Heart left ventricle (tissue), 16 donors: ENCODE measurements at regions of chr1 and their contacts with region 1.

Region 1: GRCh38 chr1:9867408-9868243 is 42.4 kb downstream of the CTNNBIP1 start:
- DNase-seq: peak; percentile 72 to 89 (median 80)
- ATAC-seq: peak; percentile 68 to 88 (median 80)
- H3K4me3 ChIP-seq: no peak overlapping the region
- H3K27ac ChIP-seq: no peak overlapping the region
- H3K4me1 ChIP-seq: peaks cover 0 to 19% (median 6%) of the 10 kb centered on the region in 12 donors
- H3K27me3 ChIP-seq: no peaks in the 10 kb centered on the region
- CTCF ChIP-seq: peak; percentile 95 to 100 (median 98)
- POLR2A ChIP-seq: no peak

Region 2: DNA sequence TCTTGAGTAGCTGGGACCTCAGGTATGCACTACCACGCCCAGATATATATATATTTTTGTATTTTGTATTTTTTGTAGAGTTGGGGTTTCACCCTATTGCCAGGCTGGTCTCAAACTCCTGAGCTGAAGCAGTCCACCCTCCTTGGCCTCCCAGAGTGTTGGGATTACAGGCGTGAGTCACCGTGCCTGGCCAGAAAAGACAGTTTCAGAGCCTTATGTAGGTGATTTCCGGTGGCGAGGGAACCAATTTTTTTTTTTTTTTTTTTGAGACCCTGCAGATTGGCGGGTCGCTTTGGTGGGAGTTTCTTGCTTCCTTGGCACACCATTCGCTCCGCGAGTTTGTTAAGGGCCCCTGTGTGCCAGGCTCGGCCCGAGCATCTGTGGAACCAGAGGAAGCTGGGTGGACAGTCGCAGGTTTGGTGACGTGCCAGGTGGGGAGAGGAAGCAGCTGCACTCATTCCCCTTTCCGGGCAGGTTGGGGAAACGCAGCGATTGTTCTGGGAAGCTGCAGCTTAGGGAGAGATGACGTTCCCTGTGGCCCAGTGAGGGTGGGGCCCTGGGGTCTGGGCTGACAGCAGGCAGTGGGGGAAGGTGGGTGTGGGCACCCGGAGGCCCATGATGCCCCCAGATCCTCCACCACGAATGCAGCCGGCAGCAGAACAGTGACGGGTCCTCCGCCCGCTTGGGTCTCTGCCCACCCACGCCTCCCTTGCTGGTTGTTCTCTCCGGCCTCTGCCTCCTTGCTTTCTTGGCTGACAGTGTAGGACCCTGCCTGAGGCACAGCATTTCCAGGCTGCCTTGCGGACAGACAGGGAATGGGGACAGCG is 549.8 kb before region 1 on chr1:
- intact Hi-C with region 1: no loop called
- DNase-seq: peak in 4 of 5 donors; percentile 50 to 68 (median 58)
- ATAC-seq: peak in 3 of 4 donors; percentile 18 to 71 (median 41)
- H3K4me3 ChIP-seq: peak overlapping the region in 2 of 12 donors; percentile 7 to 12
- H3K27ac ChIP-seq: peak overlapping the region in 6 of 12 donors; percentile 13 to 62 (median 31)
- H3K4me1 ChIP-seq: peaks cover 0 to 46% (median 19%) of the 10 kb centered on the region in 12 donors
- H3K27me3 ChIP-seq: no peaks in the 10 kb centered on the region
- CTCF ChIP-seq: no peak
- POLR2A ChIP-seq: no peak

Region 3: GRCh38 chr1:9539165-9539828 is 328.3 kb before region 1 on chr1 and contains the start of gene SLC25A33:
- intact Hi-C with region 1: no loop called
- DNase-seq: peak; percentile 97 to 99 (median 97)
- ATAC-seq: peak; percentile 99 to 100 (median 100)
- H3K4me3 ChIP-seq: peak within 1 kb of the TSS; percentile 70 to 94 (median 80)
- H3K27ac ChIP-seq: peak within 1 kb of the TSS; percentile 43 to 95 (median 86)
- H3K4me1 ChIP-seq: peaks cover 0 to 37% (median 22%) of the 10 kb centered on the region in 12 donors
- H3K27me3 ChIP-seq: no peaks in the 10 kb centered on the region
- CTCF ChIP-seq: peak in 3 of 12 donors; percentile 7 to 19 (median 9)
- POLR2A ChIP-seq: peak; percentile 82 to 84
- total RNA-seq, gene SLC25A33: 2.8 to 9.7 (median 4.5) TPM

Region 4: GRCh38 chr1:9629445-9630201 is 238.0 kb before region 1 on chr1:
- intact Hi-C with region 1: loop called (anchors 1 to 5 kb)
- DNase-seq: peak; percentile 58 to 87 (median 69)
- ATAC-seq: peak; percentile 42 to 71 (median 54)
- H3K4me3 ChIP-seq: peak overlapping the region in 2 of 12 donors; percentile 26 to 54
- H3K27ac ChIP-seq: peak overlapping the region in 2 of 12 donors; percentile 13 to 85
- H3K4me1 ChIP-seq: peaks cover 0 to 62% (median 0%) of the 10 kb centered on the region in 12 donors
- H3K27me3 ChIP-seq: peaks cover 0 to 17% (median 0%) of the 10 kb centered on the region in 9 donors
- CTCF ChIP-seq: no peak
- POLR2A ChIP-seq: no peak

Region 5: GRCh38 chr1:9700340-9700739 is 167.3 kb before region 1 on chr1:
- intact Hi-C with region 1: loop called in 1 of 10 experiments (anchors 5 kb)
- DNase-seq: no peak
- ATAC-seq: no peak
- H3K4me3 ChIP-seq: no peak overlapping the region
- H3K27ac ChIP-seq: no peak overlapping the region
- H3K4me1 ChIP-seq: peaks cover 0 to 34% (median 0%) of the 10 kb centered on the region in 12 donors
- H3K27me3 ChIP-seq: no peaks in the 10 kb centered on the region
- CTCF ChIP-seq: no peak
- POLR2A ChIP-seq: no peak

Region 6: DNA sequence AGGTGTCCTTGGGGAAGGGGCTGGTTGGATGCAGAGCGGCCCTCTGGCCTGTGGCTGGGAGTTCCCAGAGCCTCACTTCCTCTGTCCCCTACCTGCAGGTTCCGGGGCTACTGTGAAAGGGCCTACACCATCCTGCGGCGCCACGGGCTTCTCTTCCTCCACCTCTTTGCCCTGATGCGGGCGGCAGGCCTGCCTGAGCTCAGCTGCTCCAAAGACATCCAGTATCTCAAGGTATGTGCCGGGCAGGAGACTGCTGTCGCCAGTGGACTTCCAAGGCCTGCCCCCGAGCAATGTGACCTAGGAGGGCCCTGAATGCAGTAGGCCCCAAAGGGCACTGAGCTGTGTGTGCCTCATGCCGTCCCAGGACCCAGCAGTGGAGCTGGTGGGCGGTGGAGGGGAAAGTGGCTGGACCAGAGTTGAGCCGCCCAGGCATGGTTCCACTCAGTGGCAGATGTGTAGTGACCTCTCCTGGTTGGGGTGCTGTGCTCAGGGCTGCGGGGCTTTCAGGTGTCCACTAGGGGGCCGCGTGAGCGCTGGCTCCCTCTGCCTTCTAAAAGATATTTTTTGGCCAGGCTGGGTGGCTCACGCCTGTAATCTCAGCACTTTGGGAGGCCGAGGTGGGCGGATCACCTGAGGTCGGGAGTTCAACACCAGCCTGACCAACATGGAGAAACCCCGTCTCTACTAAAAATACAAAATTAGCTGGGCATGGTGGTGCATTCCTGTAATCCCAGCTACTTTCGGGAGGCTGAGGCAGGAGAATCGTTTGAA is 142.7 kb before region 1 on chr1:
- intact Hi-C with region 1: loop called in 9 of 10 experiments (anchors 2 to 10 kb)
- DNase-seq: peak in 2 of 5 donors; percentile 46 to 83
- ATAC-seq: peak; percentile 42 to 69 (median 66)
- H3K4me3 ChIP-seq: no peak overlapping the region
- H3K27ac ChIP-seq: no peak overlapping the region
- H3K4me1 ChIP-seq: peaks cover 0 to 6% (median 0%) of the 10 kb centered on the region in 12 donors
- H3K27me3 ChIP-seq: no peaks in the 10 kb centered on the region
- CTCF ChIP-seq: peak; percentile 55 to 80 (median 68)
- POLR2A ChIP-seq: no peak

Region 7: GRCh38 chr1:9784508-9785133 is 83.0 kb before region 1 on chr1:
- intact Hi-C with region 1: loop called (anchors 1 to 5 kb)
- DNase-seq: peak in 3 of 5 donors; percentile 21 to 38 (median 32)
- ATAC-seq: peak in 1 of 4 donors; percentile 33
- H3K4me3 ChIP-seq: no peak overlapping the region
- H3K27ac ChIP-seq: no peak overlapping the region
- H3K4me1 ChIP-seq: peaks cover 0 to 12% (median 0%) of the 10 kb centered on the region in 12 donors
- H3K27me3 ChIP-seq: no peaks in the 10 kb centered on the region
- CTCF ChIP-seq: peak; percentile 58 to 74 (median 66)
- POLR2A ChIP-seq: no peak

Region 8: GRCh38 chr1:10014016-10014415 is 146.4 kb after region 1 on chr1:
- intact Hi-C with region 1: no loop called
- DNase-seq: no peak
- ATAC-seq: no peak
- H3K4me3 ChIP-seq: no peak overlapping the region
- H3K27ac ChIP-seq: no peak overlapping the region
- H3K4me1 ChIP-seq: peaks cover 0 to 9% (median 5%) of the 10 kb centered on the region in 12 donors
- H3K27me3 ChIP-seq: no peaks in the 10 kb centered on the region
- CTCF ChIP-seq: no peak
- POLR2A ChIP-seq: no peak